Left colon (tissue), 2 donors: ENCODE measurements at regions of chr18 and their contacts with region 1.

Region 1: DNA sequence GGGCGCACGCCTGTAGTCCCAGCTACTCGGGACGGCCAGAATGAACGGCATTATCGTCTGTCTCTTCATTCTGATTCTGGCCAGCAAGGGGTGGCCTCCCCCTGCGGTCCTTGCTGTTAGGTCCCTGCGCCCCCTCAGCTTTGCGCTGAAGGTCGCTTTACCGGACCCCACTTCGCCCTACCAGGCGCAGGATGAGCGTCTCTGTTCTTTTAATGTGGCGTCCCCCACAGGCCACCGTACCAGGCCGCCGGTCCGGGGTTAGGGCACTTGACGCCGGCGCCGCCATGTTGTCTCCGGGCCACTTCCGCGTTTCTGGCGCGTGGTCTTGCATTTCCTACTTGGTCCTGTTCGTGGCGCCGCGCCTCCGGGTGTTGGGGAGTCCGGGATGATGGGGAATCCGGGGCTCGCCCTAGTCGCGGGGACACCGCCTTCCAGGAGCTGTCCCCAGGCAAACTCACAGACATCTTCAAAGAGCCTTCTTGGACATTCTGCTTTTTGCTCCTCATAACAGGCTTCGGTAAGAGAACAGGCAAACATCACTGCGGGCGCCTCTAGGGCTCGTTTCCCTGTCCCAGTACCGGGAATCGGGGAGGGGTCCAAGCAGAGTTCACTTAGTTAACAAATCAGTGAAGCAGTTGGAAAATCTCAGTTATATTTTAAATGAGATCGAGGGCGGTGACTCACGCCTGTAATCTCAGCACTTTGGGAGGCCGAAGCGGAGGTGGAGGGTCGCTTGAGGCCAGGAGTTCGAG is 8.5 kb upstream of the NARS1 start:
- DNase-seq: peak; percentile 97 to 98
- ATAC-seq: peak; percentile 97

Region 2: GRCh38 chr18:57434536-57435494 is 195.4 kb before region 1 on chr18 and contains the start of gene ONECUT2:
- intact Hi-C with region 1: no loop called
- DNase-seq: peak; percentile 90 to 96
- ATAC-seq: peak; percentile 98
- total RNA-seq, gene ONECUT2: 0.31 TPM

Region 3: DNA sequence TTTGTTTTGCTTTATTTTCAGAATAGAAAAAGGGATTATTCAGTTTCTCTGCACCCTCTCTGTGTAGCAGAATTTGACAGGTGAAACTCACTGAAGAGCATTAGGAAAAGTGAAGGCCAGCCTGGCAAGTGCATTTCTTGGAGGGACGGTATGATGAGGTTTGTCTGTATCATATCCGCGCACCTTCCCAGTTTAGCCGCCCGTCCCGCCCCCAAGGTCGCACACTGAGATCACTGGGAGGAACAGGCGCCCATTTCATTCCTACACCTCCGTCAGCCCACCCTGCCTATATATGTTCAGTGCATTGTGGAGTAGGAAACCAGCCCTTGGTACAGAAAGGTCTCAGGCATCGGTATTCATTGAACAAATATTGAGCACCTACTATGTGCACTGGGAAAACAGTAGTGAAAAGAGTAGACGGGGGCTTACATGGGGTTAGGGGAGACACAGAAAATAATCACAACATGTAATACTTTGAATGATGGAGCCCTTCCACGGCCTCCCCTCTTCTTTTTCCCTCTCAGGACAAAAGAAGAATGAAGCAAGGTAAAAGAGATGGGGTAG is 43.0 kb before region 1 on chr18:
- intact Hi-C with region 1: no loop called
- DNase-seq: no peak
- ATAC-seq: no peak

Region 4: DNA sequence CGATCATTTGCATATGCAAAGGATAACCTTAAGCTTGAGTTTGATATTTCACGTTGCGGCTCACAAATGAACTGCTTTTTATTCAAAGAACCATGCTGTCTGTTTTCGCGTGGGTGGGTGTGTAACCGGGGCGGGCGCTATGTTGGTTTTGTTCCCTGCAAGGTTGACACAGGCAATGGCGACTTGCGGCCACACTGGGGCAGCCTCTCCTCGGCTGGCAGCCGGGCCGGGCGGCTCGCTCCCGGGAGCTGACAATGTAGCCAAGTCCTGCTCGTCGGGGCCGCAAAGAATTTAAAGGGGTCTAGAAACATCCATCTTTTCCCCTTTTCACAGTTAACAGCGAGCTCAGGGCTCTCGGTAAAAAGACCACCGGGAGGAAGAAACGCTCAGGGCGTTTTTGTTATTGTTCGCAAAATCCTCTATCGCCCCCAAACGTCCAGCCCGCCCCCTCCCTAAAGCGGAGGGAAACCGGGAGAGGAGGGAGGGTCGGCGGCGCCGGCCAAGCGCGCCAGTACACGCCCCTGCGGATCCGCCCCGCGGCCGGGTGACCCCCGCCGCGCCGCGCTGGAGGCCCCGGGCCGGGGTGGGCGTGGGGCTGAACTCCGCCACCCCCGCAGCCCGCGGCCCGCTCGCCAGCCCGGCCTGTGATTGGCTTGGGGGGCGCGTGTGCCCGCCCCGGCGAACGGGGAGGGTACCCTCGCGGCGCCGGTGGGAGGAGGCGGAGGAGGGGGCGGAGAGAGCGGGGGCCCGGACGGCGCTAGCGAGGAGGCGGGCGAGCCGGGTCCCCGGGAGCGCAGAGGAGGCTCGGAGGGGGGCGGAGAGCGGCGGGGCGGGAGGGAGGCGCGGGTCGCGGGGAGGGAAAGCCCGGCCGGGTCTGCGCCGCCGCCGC is 413.6 kb after region 1 on chr18 and contains the start of gene NEDD4L:
- intact Hi-C with region 1: loop called in 1 of 2 experiments (anchors 10 kb)
- DNase-seq: peak; percentile 88 to 89
- ATAC-seq: peak; percentile 73
- total RNA-seq, gene NEDD4L: 176 to 332 TPM

Region 5: GRCh38 chr18:58960946-58961722 is 1331.0 kb after region 1 on chr18:
- intact Hi-C with region 1: no loop called
- DNase-seq: no peak
- ATAC-seq: no peak